IMR-90 (cell line): ENCODE measurements at regions of chr3 and their contacts with region 1.

Region 1: DNA sequence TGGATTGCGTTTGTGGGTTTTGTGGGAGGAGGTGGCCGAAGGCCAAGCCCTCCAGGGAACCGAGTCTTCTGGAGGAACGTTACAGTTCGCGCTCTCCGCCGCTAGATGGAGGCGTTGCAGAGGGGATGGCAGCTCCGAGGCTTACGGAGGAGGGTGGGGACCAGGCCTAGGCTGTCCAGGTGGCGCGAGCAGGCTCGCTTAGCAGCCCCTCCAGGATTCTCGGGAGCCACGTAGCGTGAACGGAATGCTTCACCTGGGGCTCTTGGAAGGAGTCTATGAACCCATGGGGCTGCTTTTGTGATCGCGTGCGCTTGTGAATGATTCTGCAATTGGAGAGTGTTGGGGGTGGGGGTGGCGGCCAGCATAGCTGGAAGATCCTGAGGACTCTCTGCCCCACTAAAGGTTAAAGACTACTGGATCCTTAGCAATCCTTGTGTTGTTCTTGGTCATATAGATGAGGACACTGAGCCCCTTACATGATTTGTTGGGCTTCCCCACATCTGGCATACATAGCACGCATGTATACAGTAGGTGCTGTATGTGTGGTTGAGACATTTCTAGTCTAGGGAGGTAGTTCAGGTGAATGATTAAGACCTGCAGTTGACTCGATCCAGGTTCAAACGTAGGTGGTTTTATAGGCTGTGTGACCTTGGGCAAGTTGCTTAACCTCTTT is 25.7 kb downstream of the FAM3D start:
- DNase-seq: peak; percentile 74
- ATAC-seq: peak; percentile 97
- H3K4me3 ChIP-seq: no peak overlapping the region
- H3K27ac ChIP-seq: no peak overlapping the region
- H3K4me1 ChIP-seq: peaks cover 7% of the 10 kb centered on the region; the same call in 1 of the 2 replicates
- H3K27me3 ChIP-seq: no peaks in the 10 kb centered on the region
- CTCF ChIP-seq: peak; percentile 92
- POLR2A ChIP-seq: peak; percentile 27; the same call in 1 of the 2 replicates
- RAD21 ChIP-seq: peak; percentile 98

Region 2: GRCh38 chr3:58651276-58651675 is 10.4 kb after region 1 on chr3:
- CTCF ChIA-PET with region 1: no interaction called
- POLR2A ChIA-PET with region 1: no interaction called
- dilution Hi-C with region 1: no loop called
- in situ Hi-C with region 1: no loop called
- intact Hi-C with region 1: no loop called
- DNase-seq: peak; percentile 51
- ATAC-seq: peak; percentile 51
- H3K4me3 ChIP-seq: no peak overlapping the region
- H3K27ac ChIP-seq: no peak overlapping the region
- H3K4me1 ChIP-seq: peaks cover 3% of the 10 kb centered on the region
- H3K27me3 ChIP-seq: peaks cover 19% of the 10 kb centered on the region
- CTCF ChIP-seq: no peak
- POLR2A ChIP-seq: no peak
- RAD21 ChIP-seq: no peak

Region 3: GRCh38 chr3:59049671-59050331 is 409.0 kb after region 1 on chr3 and contains the start of gene CFAP20DC:
- CTCF ChIA-PET with region 1: interaction called, 7 read pairs
- POLR2A ChIA-PET with region 1: no interaction called
- dilution Hi-C with region 1: no loop called
- in situ Hi-C with region 1: loop called (anchors 10 kb)
- intact Hi-C with region 1: loop called (anchors 1 kb)
- DNase-seq: peak; percentile 89
- ATAC-seq: peak; percentile 100
- H3K4me3 ChIP-seq: peak within 1 kb of the TSS; percentile 88
- H3K27ac ChIP-seq: peak within 1 kb of the TSS; percentile 81
- H3K4me1 ChIP-seq: 0 out of 2 replicates have a peak, but pooled peaks cover 2% of the 10 kb centered on the region
- H3K27me3 ChIP-seq: no peaks in the 10 kb centered on the region
- CTCF ChIP-seq: no peak
- POLR2A ChIP-seq: peak; percentile 85
- RAD21 ChIP-seq: no peak
- total RNA-seq, gene CFAP20DC: 1.6 and 2.8 TPM in 2 replicates

Region 4: GRCh38 chr3:59809710-59810444 is 1169.0 kb after region 1 on chr3:
- CTCF ChIA-PET with region 1: no interaction called
- POLR2A ChIA-PET with region 1: no interaction called
- dilution Hi-C with region 1: no loop called
- in situ Hi-C with region 1: loop called (anchors 25 kb)
- intact Hi-C with region 1: no loop called
- DNase-seq: peak; percentile 57
- ATAC-seq: peak; percentile 33; the same call in 1 of the 2 replicates
- H3K4me3 ChIP-seq: no peak overlapping the region
- H3K27ac ChIP-seq: peak overlapping the region; percentile 71
- H3K4me1 ChIP-seq: peaks cover 10% of the 10 kb centered on the region
- H3K27me3 ChIP-seq: no peaks in the 10 kb centered on the region
- CTCF ChIP-seq: peak; percentile 47
- POLR2A ChIP-seq: no peak
- RAD21 ChIP-seq: peak; percentile 47